Calu3 (cell line): ENCODE measurements at regions of chr1 and their contacts with region 1.

Region 1: GRCh38 chr1:163071405-163072255 is 2.5 kb downstream of the RGS4 start:
- DNase-seq: peak; percentile 79
- H3K4me3 Mint-ChIP-seq: no peak overlapping the region
- H3K27ac Mint-ChIP-seq: no peak overlapping the region
- H3K4me1 Mint-ChIP-seq: no peaks in the 10 kb centered on the region
- H3K27me3 Mint-ChIP-seq: peaks cover 41% of the 10 kb centered on the region
- CTCF ChIP-seq: peak; percentile 81

Region 2: DNA sequence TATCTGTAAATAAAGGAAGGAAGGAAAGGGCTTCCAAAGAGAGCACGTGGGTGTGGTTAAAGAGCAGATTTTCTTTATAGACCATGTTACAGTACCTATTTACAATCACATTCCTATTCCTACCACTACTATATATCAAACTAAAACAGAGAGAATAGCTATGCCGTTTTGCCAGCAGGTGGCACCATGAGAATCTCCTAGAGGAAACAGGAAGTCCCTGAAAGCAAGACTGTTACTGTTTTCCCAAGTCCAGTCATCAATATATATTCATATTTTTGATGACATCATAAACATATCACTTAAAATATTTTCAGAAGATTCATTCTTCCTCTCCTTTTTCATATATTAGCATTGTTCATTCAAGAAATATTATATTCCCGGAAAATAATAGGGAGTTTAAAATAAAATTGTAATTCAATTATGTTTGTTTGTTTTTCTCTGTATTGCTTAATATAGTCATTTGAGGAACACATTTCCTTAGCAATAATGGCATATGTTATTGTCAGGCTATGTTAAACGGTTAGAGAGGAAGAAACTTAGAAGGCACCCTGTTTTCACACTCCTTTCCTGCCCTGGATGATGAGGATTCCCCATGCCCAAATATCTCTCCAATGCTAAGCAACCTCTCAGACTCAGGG is 217.3 kb before region 1 on chr1:
- CTCF ChIA-PET with region 1: interaction called, 21 read pairs
- intact Hi-C with region 1: loop called (anchors 1 kb)
- DNase-seq: peak; percentile 79
- H3K4me3 Mint-ChIP-seq: no peak overlapping the region
- H3K27ac Mint-ChIP-seq: no peak overlapping the region
- H3K4me1 Mint-ChIP-seq: peaks cover 30% of the 10 kb centered on the region
- H3K27me3 Mint-ChIP-seq: no peaks in the 10 kb centered on the region
- CTCF ChIP-seq: peak; percentile 78

Region 3: GRCh38 chr1:162930976-162931560 is 140.6 kb before region 1 on chr1:
- CTCF ChIA-PET with region 1: no interaction called
- intact Hi-C with region 1: no loop called
- DNase-seq: no peak
- H3K4me3 Mint-ChIP-seq: no peak overlapping the region
- H3K27ac Mint-ChIP-seq: no peak overlapping the region
- H3K4me1 Mint-ChIP-seq: no peaks in the 10 kb centered on the region
- H3K27me3 Mint-ChIP-seq: no peaks in the 10 kb centered on the region
- CTCF ChIP-seq: no peak

Region 4: GRCh38 chr1:162987866-162988265 is 83.8 kb before region 1 on chr1:
- CTCF ChIA-PET with region 1: no interaction called
- intact Hi-C with region 1: loop called (anchors 1 kb)
- DNase-seq: no peak
- H3K4me3 Mint-ChIP-seq: no peak overlapping the region
- H3K27ac Mint-ChIP-seq: no peak overlapping the region
- H3K4me1 Mint-ChIP-seq: no peaks in the 10 kb centered on the region
- H3K27me3 Mint-ChIP-seq: no peaks in the 10 kb centered on the region
- CTCF ChIP-seq: no peak

Region 5: DNA sequence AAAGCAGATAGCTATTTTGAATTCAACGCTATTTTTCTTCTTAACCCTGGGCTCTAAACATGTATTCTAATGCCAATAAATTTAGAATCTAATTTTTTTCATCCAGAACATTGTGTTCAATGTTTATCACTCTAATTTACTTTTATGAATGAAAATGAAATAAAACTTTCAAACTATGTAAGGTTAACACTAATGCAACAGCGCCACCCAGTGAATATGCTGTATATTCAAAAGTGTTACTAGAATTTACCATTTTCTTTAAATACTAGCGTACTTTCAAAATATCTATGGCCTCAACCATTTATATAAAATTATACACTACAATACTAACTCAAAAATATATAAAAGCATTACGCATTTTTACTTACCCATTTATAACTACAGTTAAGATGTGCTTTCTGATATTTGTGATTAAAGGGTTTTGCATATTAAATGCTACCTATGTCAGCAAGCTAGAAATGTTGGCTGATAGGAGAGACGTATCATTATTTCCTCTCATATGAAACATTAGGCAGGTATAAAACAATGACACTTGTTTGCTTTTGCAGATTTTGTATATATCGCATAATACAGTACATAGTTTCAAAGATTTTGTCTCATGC is 244.2 kb after region 1 on chr1:
- CTCF ChIA-PET with region 1: interaction called, 11 read pairs
- intact Hi-C with region 1: loop called (anchors 1 kb)
- DNase-seq: peak; percentile 59
- H3K4me3 Mint-ChIP-seq: no peak overlapping the region
- H3K27ac Mint-ChIP-seq: no peak overlapping the region
- H3K4me1 Mint-ChIP-seq: peaks cover 4% of the 10 kb centered on the region
- H3K27me3 Mint-ChIP-seq: no peaks in the 10 kb centered on the region
- CTCF ChIP-seq: peak; percentile 55